Heart right ventricle (tissue), 16 donors: ENCODE measurements at regions of chr13 and their contacts with region 1.

Region 1: GRCh38 chr13:93505104-93505952 is 278.7 kb downstream of the GPC6 start:
- DNase-seq: no peak
- ATAC-seq: peak in 2 of 8 donors; percentile 49 to 52
- H3K4me3 ChIP-seq: no peak overlapping the region
- H3K27ac ChIP-seq: no peak overlapping the region
- H3K4me1 ChIP-seq: peaks cover 0 to 4% (median 0%) of the 10 kb centered on the region in 9 donors
- H3K27me3 ChIP-seq: no peaks in the 10 kb centered on the region
- CTCF ChIP-seq: no peak

Region 2: GRCh38 chr13:93190006-93190405 is 315.3 kb before region 1 on chr13:
- intact Hi-C with region 1: no loop called
- DNase-seq: no peak
- ATAC-seq: no peak
- H3K4me3 ChIP-seq: no peak overlapping the region
- H3K27ac ChIP-seq: no peak overlapping the region
- H3K4me1 ChIP-seq: no peaks in the 10 kb centered on the region
- H3K27me3 ChIP-seq: no peaks in the 10 kb centered on the region
- CTCF ChIP-seq: no peak

Region 3: DNA sequence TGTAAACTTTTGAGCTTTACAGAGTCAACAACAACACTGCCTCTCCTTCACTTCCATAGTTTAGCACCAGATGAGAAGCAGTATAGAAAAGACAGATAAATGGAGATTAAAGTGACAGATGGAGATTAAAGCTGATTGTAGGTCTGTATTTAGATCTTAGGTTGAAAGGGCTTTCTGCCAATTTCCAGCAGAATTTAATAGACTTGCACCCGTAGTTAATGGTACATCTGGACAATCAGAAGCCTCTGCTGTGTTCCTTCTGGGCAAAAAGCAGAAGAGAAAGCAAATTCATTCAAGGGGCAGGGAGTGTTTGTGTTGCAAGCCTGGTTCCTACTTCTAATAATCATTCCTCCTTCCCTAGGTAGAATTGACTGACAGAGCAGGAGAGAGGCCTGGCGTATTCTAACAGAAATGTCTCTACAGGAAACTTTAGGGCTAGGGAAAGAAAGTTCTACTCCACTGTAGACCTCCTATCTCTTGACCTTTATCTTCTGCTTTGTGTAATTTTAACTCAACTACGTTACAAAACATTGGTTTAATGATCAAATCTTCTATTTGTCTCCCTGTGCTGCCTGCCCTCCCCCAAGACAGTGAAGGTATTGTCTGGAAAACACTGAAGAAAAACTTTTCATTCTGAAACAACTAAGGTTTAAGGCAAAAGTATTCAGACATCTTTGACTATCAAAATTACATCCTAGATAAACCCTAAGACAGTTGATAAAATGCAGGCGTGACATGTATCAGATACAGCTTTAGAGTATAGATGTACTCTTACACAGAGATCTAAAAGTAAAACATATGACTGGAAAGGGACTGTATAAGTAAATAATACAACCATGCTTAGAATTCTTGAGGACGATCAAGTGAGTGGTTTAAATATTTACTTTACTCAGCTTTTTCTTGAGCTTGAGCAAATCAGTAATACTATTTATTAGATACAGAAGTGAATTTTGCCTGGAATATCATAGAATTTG is 234.3 kb before region 1 on chr13:
- intact Hi-C with region 1: no loop called
- DNase-seq: no peak
- ATAC-seq: no peak
- H3K4me3 ChIP-seq: no peak overlapping the region
- H3K27ac ChIP-seq: no peak overlapping the region
- H3K4me1 ChIP-seq: no peaks in the 10 kb centered on the region
- H3K27me3 ChIP-seq: no peaks in the 10 kb centered on the region
- CTCF ChIP-seq: no peak

Region 4: GRCh38 chr13:93549326-93550005 is 44.1 kb after region 1 on chr13:
- intact Hi-C with region 1: loop called in 1 of 10 experiments (anchors 1 kb)
- DNase-seq: no peak
- ATAC-seq: no peak
- H3K4me3 ChIP-seq: no peak overlapping the region
- H3K27ac ChIP-seq: no peak overlapping the region
- H3K4me1 ChIP-seq: no peaks in the 10 kb centered on the region
- H3K27me3 ChIP-seq: no peaks in the 10 kb centered on the region
- CTCF ChIP-seq: no peak